Naive thymus-derived CD4-positive, alpha-beta T cell (primary cell): ENCODE measurements at regions of chr10 and their contacts with region 1.

Region 1: DNA sequence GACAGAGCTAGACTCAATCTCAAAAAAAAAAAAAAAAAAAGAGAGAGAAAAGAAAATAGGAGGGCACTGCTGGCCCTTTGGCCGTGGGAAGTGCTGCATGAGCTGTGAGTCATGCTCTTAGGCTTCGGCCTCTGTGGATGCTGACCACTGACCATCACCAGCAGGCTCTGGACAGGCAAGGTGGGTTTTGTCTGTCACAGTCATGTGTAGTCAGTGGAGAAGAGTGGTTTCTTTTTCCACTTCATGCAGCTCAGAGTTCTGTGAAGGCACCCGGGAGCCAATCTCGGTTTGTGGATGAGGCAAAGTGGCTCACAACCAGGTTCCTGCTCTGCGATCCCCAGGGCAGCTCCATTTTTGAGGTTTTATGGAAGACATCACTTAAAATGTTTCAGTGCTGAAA is 58.1 kb downstream of the PRTFDC1 start:
- DNase-seq: no peak
- ATAC-seq: peak; percentile 41
- H3K4me3 ChIP-seq: peak overlapping the region; percentile 38
- H3K4me3 Mint-ChIP-seq: peak overlapping the region; percentile 62 to 90 (median 80)
- H3K27ac ChIP-seq: peak overlapping the region; percentile 29
- H3K27ac Mint-ChIP-seq: peak overlapping the region; percentile 82 to 98 (median 95)
- H3K4me1 ChIP-seq: peaks cover 18 to 26% of the 10 kb centered on the region in 2 donors
- H3K4me1 Mint-ChIP-seq: peaks cover 25 to 58% (median 55%) of the 10 kb centered on the region in 7 donors
- H3K27me3 ChIP-seq: no peaks in the 10 kb centered on the region
- H3K27me3 Mint-ChIP-seq: no peaks in the 10 kb centered on the region

Region 2: GRCh38 chr10:24916365-24916764 is 22.1 kb after region 1 on chr10:
- CTCF ChIA-PET with region 1: no interaction called
- POLR2A ChIA-PET with region 1: no interaction called
- intact Hi-C with region 1: loop called in 1 of 2 experiments (anchors 2 kb)
- DNase-seq: no peak
- ATAC-seq: no peak
- H3K4me3 ChIP-seq: no peak overlapping the region
- H3K4me3 Mint-ChIP-seq: no peak overlapping the region
- H3K27ac ChIP-seq: no peak overlapping the region
- H3K27ac Mint-ChIP-seq: no peak overlapping the region
- H3K4me1 ChIP-seq: no peaks in the 10 kb centered on the region
- H3K4me1 Mint-ChIP-seq: peaks cover 6 to 24% (median 18%) of the 10 kb centered on the region in 7 donors
- H3K27me3 ChIP-seq: no peaks in the 10 kb centered on the region
- H3K27me3 Mint-ChIP-seq: no peaks in the 10 kb centered on the region